PC-9 (cell line): ENCODE measurements at regions of chr15 and their contacts with region 1.

Region 1: DNA sequence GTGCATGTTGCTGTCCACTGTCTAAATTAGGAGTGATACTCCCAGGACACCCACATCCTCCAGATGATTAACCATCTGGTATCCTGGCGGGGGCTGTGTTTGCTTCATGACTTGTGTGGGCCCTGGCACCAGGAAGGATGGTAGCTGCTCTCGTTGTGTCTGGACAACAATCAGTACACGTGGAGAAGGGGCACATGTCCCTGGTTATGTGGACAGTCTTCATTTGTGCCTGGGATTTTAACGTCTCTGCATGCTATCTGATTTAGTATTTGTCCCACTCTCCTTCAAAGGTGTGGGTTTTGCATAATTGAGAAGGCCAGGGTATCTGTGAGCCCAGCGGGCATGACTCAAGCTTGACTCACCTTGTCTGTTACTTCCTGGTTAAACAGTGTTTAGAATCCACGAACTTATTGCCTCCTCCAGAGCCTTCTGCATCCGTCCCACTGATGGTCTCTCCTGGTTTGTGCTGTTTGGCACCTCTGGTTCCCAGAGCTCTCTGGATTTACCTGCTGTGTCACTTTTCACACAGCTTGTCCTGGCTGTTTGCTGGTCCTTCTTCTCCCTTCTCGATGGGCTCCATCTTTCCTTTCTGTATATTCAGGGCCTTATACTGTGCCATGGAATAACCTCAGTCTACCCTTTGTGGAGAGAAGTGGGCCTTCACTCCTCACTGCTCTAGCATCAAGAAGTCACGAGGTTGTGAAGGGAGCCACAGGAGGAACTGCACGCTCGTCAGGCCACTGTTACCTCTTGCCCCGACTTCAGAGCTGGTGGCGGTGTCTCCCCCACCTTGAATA is 32.5 kb downstream of the ARNT2 start:
- DNase-seq: peak; percentile 64 to 95
- H3K4me3 ChIP-seq: peak overlapping the region; percentile 16; the same call in 1 of the 2 replicates
- H3K27ac ChIP-seq: peak overlapping the region; percentile 94
- H3K4me1 ChIP-seq: peaks cover 28% of the 10 kb centered on the region
- H3K27me3 ChIP-seq: no peaks in the 10 kb centered on the region
- CTCF ChIP-seq: no peak

Region 2: DNA sequence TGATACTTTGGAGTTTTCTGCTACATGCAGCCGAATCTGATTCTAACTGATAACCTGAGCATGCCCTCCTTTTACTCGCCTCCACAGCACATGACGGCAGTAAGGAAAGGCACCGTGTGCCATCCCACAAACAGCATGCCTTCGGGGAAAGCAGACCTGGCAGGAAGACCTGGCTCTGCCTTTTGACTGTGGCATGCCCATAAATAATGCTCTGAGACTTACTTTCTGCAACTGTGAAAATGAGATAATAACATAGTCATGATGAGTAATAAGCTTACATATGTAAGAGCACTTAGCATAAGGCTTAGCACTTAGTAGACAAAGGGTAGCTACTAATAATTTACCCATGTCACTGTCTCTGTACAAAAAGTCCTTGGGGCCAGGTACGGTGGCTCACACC is 572.8 kb before region 1 on chr15:
- CTCF ChIA-PET with region 1: no interaction called
- POLR2A ChIA-PET with region 1: interaction called, 19 read pairs
- intact Hi-C with region 1: no loop called
- DNase-seq: no peak
- H3K4me3 ChIP-seq: no peak overlapping the region
- H3K27ac ChIP-seq: no peak overlapping the region
- H3K4me1 ChIP-seq: no peaks in the 10 kb centered on the region
- H3K27me3 ChIP-seq: no peaks in the 10 kb centered on the region
- CTCF ChIP-seq: no peak